Heart left ventricle (tissue), 16 donors: ENCODE measurements at regions of chrX and their contacts with region 1.

Region 1: GRCh38 chrX:48696301-48697181 is at the start of gene SUV39H1:
- DNase-seq: peak; percentile 87 to 94 (median 90)
- ATAC-seq: peak; percentile 93 to 99 (median 98)
- H3K4me3 ChIP-seq: peak within 1 kb of the TSS in 11 of 12 donors; percentile 41 to 87 (median 63)
- H3K27ac ChIP-seq: peak within 1 kb of the TSS; percentile 61 to 93 (median 87)
- H3K4me1 ChIP-seq: peaks cover 0 to 16% (median 2%) of the 10 kb centered on the region in 12 donors
- H3K27me3 ChIP-seq: peaks cover 0 to 3% (median 0%) of the 10 kb centered on the region in 9 donors
- CTCF ChIP-seq: no peak
- POLR2A ChIP-seq: peak; percentile 55 to 91
- total RNA-seq, gene SUV39H1: 2.4 to 6.7 (median 3.6) TPM

Region 2: GRCh38 chrX:48676106-48676892 is 20.2 kb before region 1 on chrX:
- intact Hi-C with region 1: loop called in 1 of 10 experiments (anchors 2 kb)
- DNase-seq: peak; percentile 89 to 95 (median 92)
- ATAC-seq: peak; percentile 99 to 100 (median 100)
- H3K4me3 ChIP-seq: peak overlapping the region; percentile 41 to 95 (median 76)
- H3K27ac ChIP-seq: peak overlapping the region; percentile 47 to 93 (median 87)
- H3K4me1 ChIP-seq: peaks cover 0 to 9% (median 0%) of the 10 kb centered on the region in 12 donors
- H3K27me3 ChIP-seq: no peaks in the 10 kb centered on the region
- CTCF ChIP-seq: peak in 1 of 12 donors; percentile 9
- POLR2A ChIP-seq: peak in 1 of 2 donors; percentile 72

Region 3: DNA sequence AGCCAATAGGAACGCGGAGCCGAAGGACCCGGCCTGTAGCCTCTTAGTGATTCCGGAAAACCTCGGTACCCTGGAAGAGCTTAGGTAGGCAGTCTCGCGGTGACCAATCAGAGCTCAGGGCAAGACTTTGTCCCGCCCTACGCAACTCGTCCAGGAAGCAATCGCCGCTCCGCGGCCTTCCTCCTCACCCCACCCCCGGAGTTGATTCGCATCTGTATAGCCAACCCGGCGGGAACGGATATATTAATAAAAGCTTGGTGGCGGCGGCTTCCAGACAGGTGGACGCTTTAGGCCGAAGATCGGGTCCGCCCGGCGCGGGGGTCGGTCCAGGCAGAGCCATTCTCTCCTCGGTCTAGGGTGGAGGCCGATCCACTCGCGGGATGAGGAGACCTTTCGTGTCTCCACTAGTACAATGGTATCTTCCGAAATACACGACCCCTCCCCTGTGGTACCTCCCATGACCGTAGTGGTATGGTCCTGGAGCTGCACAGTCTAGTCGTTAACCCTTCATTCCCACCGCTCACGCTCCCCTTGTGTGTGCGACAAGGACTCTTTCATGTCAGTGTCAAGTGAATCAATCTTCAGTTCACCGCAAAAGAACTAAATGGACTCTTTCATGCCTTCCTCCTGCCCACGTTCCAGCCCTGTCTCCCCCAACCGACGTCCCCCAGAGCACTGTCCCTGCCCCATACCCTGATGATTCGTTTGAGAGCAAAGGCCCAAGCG is 40.8 kb after region 1 on chrX:
- intact Hi-C with region 1: loop called in 2 of 10 experiments (anchors 5 kb)
- DNase-seq: peak; percentile 91 to 95 (median 92)
- ATAC-seq: peak; percentile 99 to 100 (median 99)
- H3K4me3 ChIP-seq: peak overlapping the region; percentile 19 to 89 (median 68)
- H3K27ac ChIP-seq: peak overlapping the region; percentile 76 to 94 (median 88)
- H3K4me1 ChIP-seq: peaks cover 0 to 9% (median 2%) of the 10 kb centered on the region in 12 donors
- H3K27me3 ChIP-seq: no peaks in the 10 kb centered on the region
- CTCF ChIP-seq: no peak
- POLR2A ChIP-seq: peak in 1 of 2 donors; percentile 58

Region 4: DNA sequence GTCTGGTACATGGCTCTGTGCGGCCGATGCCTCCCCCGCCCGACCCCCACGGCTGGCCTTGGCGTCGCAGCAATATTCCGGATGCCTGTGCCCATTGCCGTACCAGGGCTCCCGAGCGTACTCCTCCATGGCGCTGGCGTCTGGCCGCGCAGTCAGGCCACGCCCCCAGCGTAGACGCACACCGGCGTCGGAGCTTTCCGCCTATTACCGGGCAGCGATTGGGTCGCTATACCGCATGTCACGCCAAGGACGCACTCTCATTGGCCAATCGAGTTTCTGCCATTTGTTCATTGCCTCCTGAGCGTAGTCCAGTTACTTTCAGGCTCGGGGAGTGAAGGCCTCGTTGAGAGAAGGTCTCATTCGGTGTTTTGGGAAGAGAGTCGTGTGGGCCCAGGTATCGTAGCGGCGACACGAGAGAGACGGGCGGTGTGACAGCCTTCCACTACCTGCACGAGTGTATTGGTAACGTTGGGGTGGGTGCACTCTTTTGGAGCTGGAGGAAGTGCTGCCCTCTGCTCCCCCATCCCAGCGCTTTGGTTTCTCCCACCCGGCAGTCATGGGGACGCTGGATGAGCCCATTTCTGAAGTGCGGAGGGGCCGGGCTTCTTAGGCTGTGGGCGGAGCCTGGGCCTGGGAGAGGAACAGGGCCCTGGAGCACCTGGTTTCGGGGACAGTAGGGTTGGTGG is 201.2 kb after region 1 on chrX and contains the starts of genes PQBP1 and TIMM17B:
- intact Hi-C with region 1: loop called in 2 of 10 experiments (anchors 10 kb)
- DNase-seq: peak; percentile 90 to 94 (median 92)
- ATAC-seq: peak; percentile 95 to 98 (median 96)
- H3K4me3 ChIP-seq: peak within 1 kb of the TSS; percentile 33 to 88 (median 77)
- H3K27ac ChIP-seq: peak within 1 kb of the TSS; percentile 89 to 97 (median 94)
- H3K4me1 ChIP-seq: peaks cover 0 to 20% (median 10%) of the 10 kb centered on the region in 12 donors
- H3K27me3 ChIP-seq: peaks cover 0 to 3% (median 0%) of the 10 kb centered on the region in 9 donors
- CTCF ChIP-seq: no peak
- POLR2A ChIP-seq: peak in 1 of 2 donors; percentile 86
- total RNA-seq, gene PQBP1: 45.3 to 67.0 (median 52.9) TPM
- total RNA-seq, gene TIMM17B: 57.1 to 86.9 (median 71.0) TPM

Region 5: GRCh38 chrX:49053223-49054072 is 356.9 kb after region 1 on chrX:
- intact Hi-C with region 1: loop called in 1 of 10 experiments (anchors 10 kb)
- DNase-seq: peak; percentile 35 to 74 (median 63)
- ATAC-seq: peak in 3 of 4 donors; percentile 82 to 86 (median 83)
- H3K4me3 ChIP-seq: peak overlapping the region; percentile 35 to 78 (median 62)
- H3K27ac ChIP-seq: peak overlapping the region; percentile 31 to 88 (median 73)
- H3K4me1 ChIP-seq: peaks cover 0 to 3% (median 0%) of the 10 kb centered on the region in 12 donors
- H3K27me3 ChIP-seq: no peaks in the 10 kb centered on the region
- CTCF ChIP-seq: no peak
- POLR2A ChIP-seq: no peak